ENCODE measurements at regions of chr5 and their contacts with region 1.

Region 1: DNA sequence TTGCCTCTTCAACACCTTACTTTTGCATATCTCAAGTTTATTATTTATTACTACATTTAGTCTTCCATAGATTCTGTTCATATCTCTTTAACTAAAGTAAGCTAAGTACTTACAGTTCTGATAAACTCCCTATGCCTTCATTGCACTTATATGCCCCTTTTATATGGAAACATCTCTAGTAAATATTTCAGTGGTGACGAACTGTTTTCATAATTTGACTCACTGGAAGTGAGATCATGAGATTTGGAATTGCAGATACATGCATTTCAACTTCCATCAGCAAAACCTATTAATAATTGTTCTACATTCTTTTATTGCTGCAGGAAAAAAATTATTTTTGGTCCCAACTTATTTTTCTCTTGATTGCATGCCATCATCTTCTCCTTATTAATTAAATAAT is 263.5 kb downstream of the CD180 start:
- DNase-seq: no peak
- H3K4me3 ChIP-seq: no peak overlapping the region
- H3K27ac ChIP-seq: no peak overlapping the region
- H3K4me1 ChIP-seq: peaks cover 18% of the 10 kb centered on the region
- CTCF ChIP-seq: no peak

Region 2: DNA sequence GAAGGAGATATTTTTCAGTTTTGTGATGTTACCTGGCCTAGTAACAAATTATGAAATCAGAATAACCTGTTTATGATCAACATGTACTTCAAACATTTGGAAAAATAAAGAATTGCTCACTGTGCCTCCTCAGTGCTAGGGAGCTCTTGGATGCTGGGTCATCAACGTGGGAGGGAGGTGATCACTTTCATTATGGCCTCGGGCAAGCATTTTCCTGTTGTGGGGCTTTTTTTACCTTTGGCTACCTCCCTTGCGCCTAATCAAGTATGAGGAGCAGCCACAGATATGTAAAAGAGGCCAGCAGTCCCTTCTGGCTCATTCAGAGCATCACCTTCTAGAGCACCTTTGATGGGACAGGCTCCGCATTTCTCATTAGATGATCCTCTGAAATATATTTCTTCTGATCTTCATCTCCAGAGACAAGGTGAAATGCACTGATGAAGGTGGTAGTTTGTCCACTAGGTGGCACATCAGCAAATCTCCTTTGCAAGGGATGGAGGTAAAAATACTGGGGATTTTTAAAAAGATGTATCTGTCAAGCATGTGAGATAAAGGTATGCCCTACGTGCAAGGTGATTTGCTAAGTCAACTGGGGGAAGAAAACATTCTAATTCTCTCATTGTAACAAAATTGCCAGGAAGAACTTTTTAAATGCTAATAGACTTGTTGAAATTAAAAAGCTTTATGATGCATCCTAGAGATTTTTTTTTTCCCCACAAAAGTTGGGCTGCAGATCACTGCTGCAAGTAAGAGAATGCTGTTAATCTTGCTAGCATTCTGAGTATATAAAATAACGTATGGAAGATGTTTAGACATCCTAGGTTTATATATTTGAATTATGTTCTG is 118.7 kb before region 1 on chr5:
- CTCF ChIA-PET with region 1: no interaction called
- POLR2A ChIA-PET with region 1: interaction called, 3 read pairs
- intact Hi-C with region 1: loop called (anchors 5 kb)
- DNase-seq: peak; percentile 54
- H3K4me3 ChIP-seq: no peak overlapping the region
- H3K27ac ChIP-seq: no peak overlapping the region
- H3K4me1 ChIP-seq: no peaks in the 10 kb centered on the region
- CTCF ChIP-seq: peak; percentile 85

Region 3: GRCh38 chr5:66945389-66946349 is 12.6 kb after region 1 on chr5:
- CTCF ChIA-PET with region 1: no interaction called
- POLR2A ChIA-PET with region 1: interaction called, 11 read pairs
- intact Hi-C with region 1: no loop called
- DNase-seq: no peak
- H3K4me3 ChIP-seq: no peak overlapping the region
- H3K27ac ChIP-seq: no peak overlapping the region
- H3K4me1 ChIP-seq: no peaks in the 10 kb centered on the region
- CTCF ChIP-seq: no peak

Measured in OCI-LY7 (cell line).